Activated CD4-positive, alpha-beta memory T cell treated with anti-CD3 and anti-CD28 coated beads for 36 hours (primary cell): ENCODE measurements at regions of chr12 and their contacts with region 1.

Region 1: DNA sequence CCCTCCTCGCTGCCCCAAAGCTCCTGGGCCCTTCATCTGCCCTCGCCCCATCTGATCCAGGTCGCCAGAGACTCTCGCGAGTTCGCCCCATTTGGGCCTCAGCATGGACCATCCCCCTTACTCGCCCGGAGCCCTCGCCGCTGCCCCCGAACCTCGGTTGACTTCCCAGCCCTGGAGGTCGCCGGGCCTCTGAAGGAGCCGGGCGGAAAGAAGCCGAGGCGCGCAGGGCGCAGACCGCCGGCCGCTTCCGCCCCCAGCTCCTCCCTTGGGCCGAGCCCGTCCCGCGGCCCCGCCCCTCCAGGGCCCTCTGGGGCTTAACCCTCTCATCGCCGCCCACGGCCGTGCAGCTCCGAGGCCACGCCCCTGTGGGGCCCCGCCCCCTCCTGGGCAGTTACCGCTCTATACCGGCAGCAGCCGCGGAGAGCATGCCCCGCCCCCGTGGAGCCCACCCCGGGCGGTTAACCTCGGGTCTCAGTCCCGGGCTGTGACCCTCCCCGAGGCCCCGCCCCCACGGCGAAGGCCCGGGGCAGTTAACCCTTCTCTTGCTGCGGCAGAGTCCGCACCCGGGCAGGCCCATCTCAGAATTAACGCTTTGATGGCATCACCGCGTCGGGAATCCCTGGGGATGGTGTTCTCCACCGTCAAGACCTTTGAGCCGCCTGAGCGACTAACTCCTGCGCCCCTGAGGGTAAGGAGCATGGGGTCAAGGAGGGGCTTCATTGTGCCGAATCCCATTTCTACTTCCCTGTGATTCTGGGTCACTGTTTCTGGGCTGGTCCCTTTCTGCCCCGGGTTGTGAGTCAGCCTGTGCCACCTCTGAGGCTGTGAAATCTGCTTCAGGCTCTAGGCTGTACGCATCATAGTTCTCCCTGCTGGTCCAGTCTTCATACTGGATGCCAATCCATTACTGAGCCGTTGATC is at the start of gene SPSB2:
- DNase-seq: peak; percentile 99
- H3K4me3 Mint-ChIP-seq: peak within 1 kb of the TSS; percentile 87
- H3K27ac Mint-ChIP-seq: peak within 1 kb of the TSS; percentile 89
- H3K4me1 Mint-ChIP-seq: peaks cover 51% of the 10 kb centered on the region
- H3K27me3 Mint-ChIP-seq: no peaks in the 10 kb centered on the region
- total RNA-seq, gene SPSB2: 3.8 to 4.7 TPM

Region 2: GRCh38 chr12:6833189-6833890 is 40.0 kb before region 1 on chr12:
- CTCF ChIA-PET with region 1: interaction called, 16 read pairs
- POLR2A ChIA-PET with region 1: interaction called, 5 read pairs
- intact Hi-C with region 1: loop called (anchors 1 kb)
- DNase-seq: no peak
- H3K4me3 Mint-ChIP-seq: no peak overlapping the region
- H3K27ac Mint-ChIP-seq: no peak overlapping the region
- H3K4me1 Mint-ChIP-seq: peaks cover 10% of the 10 kb centered on the region
- H3K27me3 Mint-ChIP-seq: peaks cover 7% of the 10 kb centered on the region

Region 3: DNA sequence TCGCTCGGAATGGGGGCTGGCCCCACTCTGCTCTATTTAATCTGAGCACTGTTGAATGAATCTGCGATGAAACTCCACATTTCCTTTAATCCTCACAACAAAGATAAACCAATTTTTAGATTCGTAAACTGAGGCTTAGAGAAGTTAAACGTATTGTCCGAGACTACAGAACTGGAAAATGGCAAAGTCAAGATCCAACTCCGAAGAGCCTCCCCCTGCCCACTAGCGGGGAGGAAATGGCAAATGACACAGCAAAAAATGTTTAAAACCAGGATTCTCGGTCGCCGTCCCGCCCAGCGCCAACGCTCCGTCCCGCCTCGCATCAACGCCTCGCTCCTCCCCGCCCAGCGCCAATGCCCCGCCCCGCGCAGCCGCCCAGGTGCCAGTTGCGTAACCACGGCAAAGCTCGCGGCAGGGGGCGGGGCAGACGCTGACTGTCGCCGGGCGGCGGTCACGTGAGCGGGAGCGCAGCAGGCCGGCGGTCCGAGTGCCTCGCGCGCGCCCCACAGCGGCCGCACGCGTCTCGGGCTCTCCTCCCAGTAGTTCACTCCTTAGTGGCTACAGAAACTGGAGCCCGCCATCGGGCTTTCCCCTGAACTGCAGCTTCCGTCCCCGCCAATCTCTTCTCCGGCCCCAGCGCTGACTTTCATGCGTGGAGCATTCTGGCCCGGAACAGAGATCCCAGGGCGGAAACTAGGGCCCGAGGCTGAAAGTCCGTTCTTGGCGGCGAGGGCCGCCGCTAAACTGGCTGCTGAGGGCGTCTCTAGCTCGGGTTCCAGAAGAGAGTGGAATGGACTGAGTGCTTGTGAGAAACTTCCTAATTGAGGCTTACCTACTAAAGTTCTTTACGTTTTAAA is 17.7 kb after region 1 on chr12:
- CTCF ChIA-PET with region 1: interaction called, 53 read pairs
- POLR2A ChIA-PET with region 1: interaction called, 24 read pairs
- intact Hi-C with region 1: loop called (anchors 1 kb)
- DNase-seq: peak; percentile 99
- H3K4me3 Mint-ChIP-seq: peak overlapping the region; percentile 84
- H3K27ac Mint-ChIP-seq: peak overlapping the region; percentile 97
- H3K4me1 Mint-ChIP-seq: peaks cover 17% of the 10 kb centered on the region
- H3K27me3 Mint-ChIP-seq: no peaks in the 10 kb centered on the region

Region 4: GRCh38 chr12:6927379-6928024 is 54.1 kb after region 1 on chr12 and contains the start of gene ATN1:
- CTCF ChIA-PET with region 1: interaction called, 10 read pairs
- POLR2A ChIA-PET with region 1: interaction called, 10 read pairs
- intact Hi-C with region 1: no loop called
- DNase-seq: peak; percentile 61
- H3K4me3 Mint-ChIP-seq: peak within 1 kb of the TSS; percentile 84
- H3K27ac Mint-ChIP-seq: peak within 1 kb of the TSS; percentile 89
- H3K4me1 Mint-ChIP-seq: peaks cover 64% of the 10 kb centered on the region
- H3K27me3 Mint-ChIP-seq: no peaks in the 10 kb centered on the region
- total RNA-seq, gene ATN1: 34.8 to 37.8 TPM

Region 5: DNA sequence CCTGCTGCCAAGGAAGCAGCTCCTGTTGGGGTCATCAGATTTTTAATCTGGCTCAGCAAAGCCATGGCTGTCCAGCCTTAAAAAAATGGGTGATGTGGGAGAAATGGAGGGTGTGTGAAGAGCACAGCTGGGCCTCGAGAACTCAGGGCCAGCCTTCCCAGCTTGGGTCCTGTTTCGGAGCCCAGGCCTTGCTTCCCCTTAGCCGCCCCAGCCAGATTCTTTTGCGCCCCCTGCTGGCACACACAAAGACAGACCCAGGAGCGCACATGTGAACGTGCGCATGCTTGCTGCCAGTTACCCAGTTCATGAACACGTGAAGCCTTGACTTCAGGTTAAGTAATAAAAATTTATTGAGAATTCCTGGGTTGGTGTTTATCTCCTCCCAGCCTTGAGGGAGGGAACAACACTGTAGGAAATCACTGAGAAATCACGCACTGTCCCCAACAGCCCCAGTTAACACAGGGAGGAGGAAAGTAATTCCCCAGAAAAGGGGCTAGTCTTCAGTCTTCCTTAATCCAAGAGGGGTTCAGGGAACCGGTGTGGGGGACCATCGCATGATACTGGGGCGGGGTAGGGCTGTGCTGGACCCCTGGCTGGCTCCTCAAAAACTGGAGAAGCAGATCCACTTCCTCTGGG is 91.8 kb after region 1 on chr12:
- CTCF ChIA-PET with region 1: interaction called, 10 read pairs
- POLR2A ChIA-PET with region 1: interaction called, 4 read pairs
- intact Hi-C with region 1: loop called (anchors 2 kb)
- DNase-seq: peak; percentile 93
- H3K4me3 Mint-ChIP-seq: no peak overlapping the region
- H3K27ac Mint-ChIP-seq: peak overlapping the region; percentile 89
- H3K4me1 Mint-ChIP-seq: peaks cover 72% of the 10 kb centered on the region
- H3K27me3 Mint-ChIP-seq: no peaks in the 10 kb centered on the region

Region 6: GRCh38 chr12:7047306-7047705 is 174.0 kb after region 1 on chr12:
- CTCF ChIA-PET with region 1: no interaction called
- POLR2A ChIA-PET with region 1: no interaction called
- intact Hi-C with region 1: no loop called
- DNase-seq: no peak
- H3K4me3 Mint-ChIP-seq: no peak overlapping the region
- H3K27ac Mint-ChIP-seq: no peak overlapping the region
- H3K4me1 Mint-ChIP-seq: peaks cover 7% of the 10 kb centered on the region
- H3K27me3 Mint-ChIP-seq: no peaks in the 10 kb centered on the region

Region 7: GRCh38 chr12:7108796-7109571 is 235.6 kb after region 1 on chr12 and contains the start of gene C1RL:
- CTCF ChIA-PET with region 1: interaction called, 5 read pairs
- POLR2A ChIA-PET with region 1: interaction called, 3 read pairs
- intact Hi-C with region 1: loop called (anchors 5 kb)
- DNase-seq: peak; percentile 89
- H3K4me3 Mint-ChIP-seq: peak within 1 kb of the TSS; percentile 95
- H3K27ac Mint-ChIP-seq: peak within 1 kb of the TSS; percentile 99
- H3K4me1 Mint-ChIP-seq: peaks cover 39% of the 10 kb centered on the region
- H3K27me3 Mint-ChIP-seq: no peaks in the 10 kb centered on the region
- total RNA-seq, gene C1RL: 17.1 to 22.6 TPM